Vagina (tissue), 2 donors: ENCODE measurements at regions of chr19 and their contacts with region 1.

Region 1: DNA sequence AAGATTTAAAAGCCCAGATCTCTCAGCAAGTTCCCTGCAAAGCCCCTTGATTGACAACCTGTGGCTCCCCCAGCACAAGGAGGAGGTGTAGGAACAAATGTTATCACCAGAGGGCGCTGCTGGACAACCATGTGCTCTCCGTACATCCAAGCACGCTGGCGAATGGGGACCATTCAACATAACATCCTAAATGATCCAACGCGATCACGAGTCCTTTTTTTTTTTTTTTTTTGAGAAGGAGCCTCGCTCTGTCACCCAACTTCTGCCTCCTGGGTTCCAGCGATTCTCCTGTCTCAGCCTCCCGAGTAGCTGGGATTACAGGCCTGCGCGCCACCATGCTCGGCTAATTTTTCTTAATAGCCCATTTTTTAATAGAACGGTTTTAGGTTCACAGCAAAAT is 52.0 kb downstream of the NWD1 start:
- DNase-seq: no peak
- H3K4me3 ChIP-seq: no peak overlapping the region
- H3K27ac ChIP-seq: no peak overlapping the region
- H3K4me1 ChIP-seq: no peaks in the 10 kb centered on the region
- H3K27me3 ChIP-seq: no peaks in the 10 kb centered on the region
- CTCF ChIP-seq: peak; percentile 81 to 90 (median 87)
- POLR2A ChIP-seq: no peak

Region 2: DNA sequence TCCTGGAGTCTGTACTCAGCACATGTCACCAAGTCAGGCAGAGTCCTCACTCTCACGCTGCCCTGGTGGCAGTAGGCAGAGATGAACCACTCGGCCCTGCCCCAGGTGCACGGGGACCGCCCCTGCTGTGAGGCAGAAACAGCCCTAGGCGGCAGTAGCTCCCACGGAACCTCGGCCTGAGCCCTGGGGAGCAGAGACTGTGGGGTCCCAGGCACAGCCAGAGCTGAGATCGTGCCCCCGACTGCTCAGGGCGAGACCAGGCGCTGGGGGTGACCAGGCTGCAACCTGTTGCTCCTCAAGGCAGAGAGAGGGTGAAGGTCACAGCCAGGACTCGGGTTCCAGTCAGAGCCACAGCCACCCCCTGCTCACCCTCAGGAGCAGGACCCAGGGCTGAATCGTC is 539.0 kb before region 1 on chr19:
- intact Hi-C with region 1: no loop called
- DNase-seq: no peak
- H3K4me3 ChIP-seq: no peak overlapping the region
- H3K27ac ChIP-seq: no peak overlapping the region
- H3K4me1 ChIP-seq: no peaks in the 10 kb centered on the region
- H3K27me3 ChIP-seq: no peaks in the 10 kb centered on the region
- CTCF ChIP-seq: no peak
- POLR2A ChIP-seq: no peak

Region 3: GRCh38 chr19:16509141-16510061 is 262.2 kb before region 1 on chr19:
- intact Hi-C with region 1: no loop called
- DNase-seq: no peak
- H3K4me3 ChIP-seq: no peak overlapping the region
- H3K27ac ChIP-seq: no peak overlapping the region
- H3K4me1 ChIP-seq: no peaks in the 10 kb centered on the region
- H3K27me3 ChIP-seq: no peaks in the 10 kb centered on the region
- CTCF ChIP-seq: no peak
- POLR2A ChIP-seq: no peak

Region 4: GRCh38 chr19:16829010-16829821 is 57.6 kb after region 1 on chr19 and contains the start of gene SIN3B:
- intact Hi-C with region 1: no loop called
- DNase-seq: no peak
- H3K4me3 ChIP-seq: peak within 1 kb of the TSS; percentile 89 to 92
- H3K27ac ChIP-seq: peak within 1 kb of the TSS; percentile 90
- H3K4me1 ChIP-seq: peaks cover 35% of the 10 kb centered on the region
- H3K27me3 ChIP-seq: no peaks in the 10 kb centered on the region
- CTCF ChIP-seq: no peak
- POLR2A ChIP-seq: peak in 1 of 2 donors; percentile 53
- total RNA-seq, gene SIN3B: 68.5 TPM

Region 5: DNA sequence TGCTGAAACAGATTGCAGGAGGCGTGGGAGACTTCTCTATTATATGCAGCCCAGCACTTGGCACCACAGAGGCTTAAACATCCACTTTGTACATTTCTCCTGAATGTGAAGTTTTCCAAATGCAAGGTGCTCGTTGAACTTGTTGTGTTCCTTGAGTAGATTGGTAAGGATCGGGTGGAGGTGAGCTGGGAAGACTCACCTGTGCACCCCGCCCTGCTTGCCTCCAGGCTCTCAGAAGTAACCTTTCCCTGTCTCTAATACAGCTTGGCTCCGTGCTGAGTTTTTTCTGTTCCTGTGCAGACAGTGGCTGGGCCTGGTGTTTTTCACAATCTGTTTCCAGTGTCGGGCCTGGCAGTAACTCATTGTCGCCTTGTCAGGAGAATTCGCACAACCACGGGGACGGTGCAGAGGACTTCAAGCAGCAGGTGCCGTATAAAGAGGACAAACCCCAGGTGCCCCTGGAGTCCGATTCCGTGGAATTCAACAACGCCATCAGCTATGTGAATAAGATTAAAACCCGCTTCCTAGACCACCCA is 69.8 kb after region 1 on chr19:
- intact Hi-C with region 1: no loop called
- DNase-seq: no peak
- H3K4me3 ChIP-seq: no peak overlapping the region
- H3K27ac ChIP-seq: no peak overlapping the region
- H3K4me1 ChIP-seq: peaks cover 3% of the 10 kb centered on the region
- H3K27me3 ChIP-seq: no peaks in the 10 kb centered on the region
- CTCF ChIP-seq: no peak
- POLR2A ChIP-seq: no peak

Region 6: GRCh38 chr19:17052439-17053210 is 281.0 kb after region 1 on chr19:
- intact Hi-C with region 1: loop called (anchors 5 kb)
- DNase-seq: no peak
- H3K4me3 ChIP-seq: no peak overlapping the region
- H3K27ac ChIP-seq: no peak overlapping the region
- H3K4me1 ChIP-seq: no peaks in the 10 kb centered on the region
- H3K27me3 ChIP-seq: no peaks in the 10 kb centered on the region
- CTCF ChIP-seq: peak; percentile 21 to 52 (median 49)
- POLR2A ChIP-seq: no peak